Caco-2 (cell line): ENCODE measurements at regions of chr12 and their contacts with region 1.

Region 1: DNA sequence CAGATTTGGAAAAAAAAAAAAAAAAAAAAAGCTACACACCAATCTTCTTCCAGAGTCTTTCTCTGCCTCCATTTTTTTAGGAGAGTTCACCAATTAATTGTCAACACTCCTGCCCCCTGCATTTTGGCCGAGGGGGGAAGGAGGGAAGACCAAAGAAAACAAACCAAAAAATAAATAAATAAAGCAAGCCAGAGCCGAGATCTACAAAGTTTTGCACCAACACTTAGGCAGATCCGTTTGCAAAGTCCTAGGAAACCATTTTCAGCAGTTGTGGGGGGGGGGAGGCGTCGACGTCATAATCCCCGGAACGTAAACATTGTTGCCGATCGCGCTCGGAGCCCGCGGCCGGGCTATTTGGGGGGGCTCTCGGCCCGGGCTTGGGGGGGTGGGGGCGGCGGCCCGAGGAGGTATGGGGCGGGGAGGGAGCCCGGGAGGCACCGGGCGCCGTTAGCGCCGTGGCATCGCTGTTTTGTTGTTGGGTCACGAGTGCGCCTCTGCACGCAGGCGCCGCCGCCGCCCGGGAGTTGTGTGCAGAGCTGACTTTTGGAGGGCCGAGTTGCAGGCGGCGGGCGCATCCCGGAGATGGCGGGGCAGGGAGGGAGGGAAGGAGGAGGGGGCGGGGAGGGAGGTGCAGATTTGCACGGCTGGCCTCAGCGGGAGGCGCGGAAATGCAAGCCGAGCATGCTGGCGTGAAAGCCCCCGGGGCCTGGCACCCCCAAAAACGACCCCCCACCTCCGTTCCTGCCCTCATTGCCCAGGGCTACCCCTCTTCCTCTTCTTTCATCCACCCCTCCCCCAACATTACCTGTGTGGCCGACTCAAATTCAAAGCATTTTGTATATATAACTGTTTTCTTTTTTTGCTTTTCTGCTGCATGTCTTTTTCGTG is 598 bp downstream of the KDM2B start:
- DNase-seq: peak; percentile 81 to 85
- H3K4me3 ChIP-seq: peak overlapping the region; percentile 76
- H3K4me3 Mint-ChIP-seq: peak overlapping the region; percentile 93
- H3K27ac Mint-ChIP-seq: peak overlapping the region; percentile 96
- H3K4me1 ChIP-seq: peaks cover 53% of the 10 kb centered on the region
- H3K4me1 Mint-ChIP-seq: peaks cover 20% of the 10 kb centered on the region
- H3K27me3 ChIP-seq: no peaks in the 10 kb centered on the region
- H3K27me3 Mint-ChIP-seq: no peaks in the 10 kb centered on the region
- CTCF ChIP-seq: no peak

Region 2: DNA sequence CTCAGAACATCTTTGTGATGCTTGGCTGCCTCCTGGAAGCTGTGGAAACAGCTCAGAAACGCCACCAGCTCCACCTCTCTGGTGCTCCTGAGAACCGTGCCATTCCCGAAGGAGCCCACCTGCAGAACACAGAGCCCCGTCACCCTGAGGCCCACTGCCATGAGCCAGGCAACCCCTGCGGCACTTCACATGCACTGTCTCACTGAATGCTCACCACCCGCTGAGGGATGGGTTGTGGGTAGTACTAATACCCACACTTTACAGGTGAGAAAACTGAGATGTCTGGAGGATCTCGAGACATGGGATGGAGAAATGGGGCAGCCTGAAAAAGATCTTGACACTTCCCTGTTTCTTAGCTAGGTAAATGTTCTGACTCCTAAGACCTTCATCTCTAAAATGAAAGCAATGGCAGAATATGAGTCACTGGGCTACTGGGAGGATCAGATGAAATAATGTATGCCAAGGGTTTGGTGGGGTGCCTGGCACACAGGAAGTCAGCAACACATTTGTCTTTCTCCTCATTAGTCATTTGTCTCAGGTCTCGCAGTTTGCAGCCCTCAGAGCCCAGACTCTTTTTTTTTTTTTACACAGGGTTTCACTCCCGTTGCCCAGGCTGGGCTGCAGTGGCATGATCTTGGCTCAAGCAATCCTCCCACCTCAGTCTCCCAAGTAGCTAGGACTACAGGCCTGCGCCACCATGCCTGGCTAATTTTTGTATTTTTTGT is 546.4 kb before region 1 on chr12:
- CTCF ChIA-PET with region 1: no interaction called
- POLR2A ChIA-PET with region 1: interaction called, 20 read pairs
- intact Hi-C with region 1: no loop called
- DNase-seq: no peak
- H3K4me3 ChIP-seq: no peak overlapping the region
- H3K4me3 Mint-ChIP-seq: no peak overlapping the region
- H3K27ac Mint-ChIP-seq: no peak overlapping the region
- H3K4me1 ChIP-seq: no peaks in the 10 kb centered on the region; the same call in 1 of the 2 replicates
- H3K4me1 Mint-ChIP-seq: no peaks in the 10 kb centered on the region
- H3K27me3 ChIP-seq: no peaks in the 10 kb centered on the region
- H3K27me3 Mint-ChIP-seq: no peaks in the 10 kb centered on the region
- CTCF ChIP-seq: no peak

Region 3: GRCh38 chr12:121304306-121304705 is 275.9 kb before region 1 on chr12:
- CTCF ChIA-PET with region 1: no interaction called
- POLR2A ChIA-PET with region 1: no interaction called
- intact Hi-C with region 1: no loop called
- DNase-seq: no peak
- H3K4me3 ChIP-seq: no peak overlapping the region
- H3K4me3 Mint-ChIP-seq: no peak overlapping the region
- H3K27ac Mint-ChIP-seq: no peak overlapping the region
- H3K4me1 ChIP-seq: no peaks in the 10 kb centered on the region
- H3K4me1 Mint-ChIP-seq: no peaks in the 10 kb centered on the region
- H3K27me3 ChIP-seq: no peaks in the 10 kb centered on the region
- H3K27me3 Mint-ChIP-seq: no peaks in the 10 kb centered on the region
- CTCF ChIP-seq: no peak

Region 4: DNA sequence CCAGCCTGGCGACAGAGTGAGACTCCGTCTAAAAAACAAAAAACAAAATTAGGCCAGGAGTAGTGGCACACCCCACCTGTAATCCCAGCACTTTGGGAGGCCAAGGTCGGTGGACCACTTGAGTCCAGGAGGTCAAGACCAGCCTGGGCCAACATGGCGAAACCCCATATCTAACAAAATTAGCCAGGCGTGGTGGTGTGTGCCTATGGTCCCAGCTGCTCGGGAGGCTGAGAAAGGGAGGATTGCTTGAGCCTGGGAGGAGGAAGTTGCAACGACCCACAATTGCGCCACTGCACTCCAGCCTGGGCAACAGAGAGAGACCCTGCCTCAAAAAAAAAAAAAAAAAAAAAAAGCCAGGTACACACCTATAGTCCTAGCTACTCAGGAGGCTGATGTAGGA is 36.4 kb before region 1 on chr12:
- CTCF ChIA-PET with region 1: no interaction called
- POLR2A ChIA-PET with region 1: no interaction called
- intact Hi-C with region 1: no loop called
- DNase-seq: no peak
- H3K4me3 ChIP-seq: no peak overlapping the region
- H3K4me3 Mint-ChIP-seq: no peak overlapping the region
- H3K27ac Mint-ChIP-seq: no peak overlapping the region
- H3K4me1 ChIP-seq: peaks cover 1% of the 10 kb centered on the region; the same call in 1 of the 2 replicates
- H3K4me1 Mint-ChIP-seq: peaks cover 3% of the 10 kb centered on the region
- H3K27me3 ChIP-seq: no peaks in the 10 kb centered on the region
- H3K27me3 Mint-ChIP-seq: no peaks in the 10 kb centered on the region
- CTCF ChIP-seq: no peak

Region 5: GRCh38 chr12:121590476-121591143 is 10.4 kb after region 1 on chr12:
- CTCF ChIA-PET with region 1: interaction called, 3 read pairs
- POLR2A ChIA-PET with region 1: no interaction called
- intact Hi-C with region 1: loop called (anchors 1 kb)
- DNase-seq: no peak
- H3K4me3 ChIP-seq: no peak overlapping the region
- H3K4me3 Mint-ChIP-seq: no peak overlapping the region
- H3K27ac Mint-ChIP-seq: peak overlapping the region; percentile 75
- H3K4me1 ChIP-seq: peaks cover 17% of the 10 kb centered on the region
- H3K4me1 Mint-ChIP-seq: peaks cover 13% of the 10 kb centered on the region
- H3K27me3 ChIP-seq: no peaks in the 10 kb centered on the region
- H3K27me3 Mint-ChIP-seq: no peaks in the 10 kb centered on the region
- CTCF ChIP-seq: no peak

Region 6: DNA sequence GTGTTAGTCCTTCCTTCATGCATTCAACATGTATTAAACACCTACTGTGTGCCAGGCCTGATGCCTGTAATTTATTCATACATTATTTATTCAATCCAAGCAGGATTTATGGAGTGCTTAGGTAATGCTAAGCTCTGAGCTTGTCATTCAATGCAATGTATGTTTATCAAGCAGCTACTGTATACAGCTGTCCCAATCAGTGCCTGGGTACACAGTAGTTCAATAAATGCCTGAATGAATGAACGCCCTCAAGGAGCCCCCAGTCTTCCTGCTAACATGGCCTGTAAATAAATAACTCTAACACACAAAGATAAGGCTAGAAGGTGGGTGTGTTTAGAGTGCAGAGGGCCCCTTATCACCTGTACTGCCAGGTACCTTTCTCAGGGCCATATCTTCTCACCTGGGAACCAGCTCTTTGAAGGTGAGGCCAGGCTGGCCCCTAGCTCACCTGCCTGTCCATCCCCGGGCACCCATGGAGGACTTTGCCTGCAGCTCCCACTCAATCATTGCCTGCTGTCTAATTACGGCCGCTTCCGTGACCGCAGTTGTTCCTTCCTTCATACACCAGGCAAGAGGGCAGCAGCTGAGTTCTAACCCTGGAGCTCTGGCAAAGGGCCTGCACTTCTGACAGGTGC is 20.6 kb after region 1 on chr12:
- CTCF ChIA-PET with region 1: interaction called, 5 read pairs
- POLR2A ChIA-PET with region 1: interaction called, 10 read pairs
- intact Hi-C with region 1: loop called (anchors 1 kb)
- DNase-seq: peak; percentile 89 to 97
- H3K4me3 ChIP-seq: no peak overlapping the region
- H3K4me3 Mint-ChIP-seq: peak overlapping the region; percentile 15
- H3K27ac Mint-ChIP-seq: peak overlapping the region; percentile 76
- H3K4me1 ChIP-seq: peaks cover 47% of the 10 kb centered on the region
- H3K4me1 Mint-ChIP-seq: peaks cover 26% of the 10 kb centered on the region
- H3K27me3 ChIP-seq: no peaks in the 10 kb centered on the region
- H3K27me3 Mint-ChIP-seq: no peaks in the 10 kb centered on the region
- CTCF ChIP-seq: no peak

Region 7: DNA sequence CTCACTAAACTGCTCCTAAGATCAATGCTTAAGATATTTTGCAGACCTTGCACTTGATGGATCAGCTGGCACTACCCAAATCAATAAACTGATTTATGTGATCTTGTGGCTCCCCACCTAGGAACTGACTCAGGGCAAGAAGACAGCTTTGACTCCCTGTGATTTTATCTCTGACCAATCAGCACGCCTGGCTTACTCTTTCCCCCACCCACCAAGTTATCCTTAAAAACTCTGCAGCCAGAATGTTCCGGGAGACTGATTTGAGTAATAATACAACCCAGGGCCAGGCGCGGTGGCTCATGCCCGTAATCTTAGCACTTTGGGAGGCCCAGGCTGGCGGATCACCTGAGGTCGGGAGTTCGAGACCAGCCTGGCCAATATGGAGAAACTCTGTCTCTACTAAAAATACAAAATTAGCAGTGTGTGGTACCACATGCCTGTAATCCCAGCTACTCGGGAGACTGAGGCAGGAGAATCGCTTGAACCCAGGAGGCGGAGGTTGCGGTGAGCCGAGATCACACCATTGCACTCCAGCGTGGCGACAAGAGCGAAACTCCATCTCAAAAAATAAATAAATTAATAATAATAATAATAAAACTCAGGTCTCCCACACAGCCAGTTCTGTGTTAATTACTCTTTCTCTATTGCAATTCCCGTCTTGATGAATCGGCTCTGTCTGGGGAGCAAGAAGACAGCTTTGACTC is 77.2 kb after region 1 on chr12:
- CTCF ChIA-PET with region 1: no interaction called
- POLR2A ChIA-PET with region 1: interaction called, 11 read pairs
- intact Hi-C with region 1: no loop called
- DNase-seq: no peak
- H3K4me3 ChIP-seq: no peak overlapping the region
- H3K4me3 Mint-ChIP-seq: no peak overlapping the region
- H3K27ac Mint-ChIP-seq: no peak overlapping the region
- H3K4me1 ChIP-seq: no peaks in the 10 kb centered on the region
- H3K4me1 Mint-ChIP-seq: peaks cover 7% of the 10 kb centered on the region
- H3K27me3 ChIP-seq: no peaks in the 10 kb centered on the region
- H3K27me3 Mint-ChIP-seq: no peaks in the 10 kb centered on the region
- CTCF ChIP-seq: no peak